GM23248 (cell line): ENCODE measurements at regions of chr5 and their contacts with region 1.

Region 1: DNA sequence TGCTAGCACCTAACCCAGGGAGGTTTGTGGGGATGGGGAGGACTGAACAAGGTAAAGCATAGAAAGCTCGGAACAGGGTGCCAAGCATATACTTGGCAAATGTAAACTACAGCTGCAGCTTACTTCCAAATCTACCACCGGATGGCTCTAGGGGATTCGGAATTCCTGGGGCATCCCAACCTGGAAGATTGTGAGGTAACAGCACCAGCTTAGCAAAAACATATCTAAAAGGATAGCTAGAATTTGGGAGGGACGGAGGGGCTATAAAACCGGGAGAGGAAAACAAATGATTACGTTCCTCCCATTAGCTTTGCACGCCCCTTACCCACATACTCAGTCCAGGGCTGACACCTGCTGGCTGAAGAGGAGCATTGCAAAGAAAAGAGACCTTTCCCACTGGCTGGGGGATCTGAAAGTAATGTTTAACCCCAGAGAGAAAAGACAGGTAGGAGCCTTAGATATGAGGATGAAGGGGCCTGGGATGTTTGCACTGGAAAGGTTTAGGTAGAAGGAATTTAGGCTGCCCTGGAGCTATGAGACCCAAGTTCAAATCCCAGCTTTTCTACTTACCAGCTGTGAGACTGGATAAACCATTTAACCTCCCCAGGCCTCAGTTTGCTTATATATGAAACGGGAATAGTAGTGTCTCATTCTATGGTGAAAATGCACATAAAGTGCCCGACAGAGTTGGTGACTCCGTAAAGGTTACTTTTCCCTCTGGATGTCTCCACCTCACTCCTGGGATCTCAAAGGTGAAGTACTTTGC is 73.6 kb downstream of the FAM114A2 start:
- DNase-seq: peak; percentile 69
- H3K4me3 ChIP-seq: peak overlapping the region; percentile 70
- H3K27ac ChIP-seq: no peak overlapping the region
- H3K4me1 ChIP-seq: peaks cover 12% of the 10 kb centered on the region
- H3K27me3 ChIP-seq: no peaks in the 10 kb centered on the region

Region 2: GRCh38 chr5:153159611-153160010 is 805.5 kb before region 1 on chr5:
- in situ Hi-C with region 1: loop called (anchors 25 kb)
- DNase-seq: peak; percentile 78
- H3K4me3 ChIP-seq: no peak overlapping the region
- H3K27ac ChIP-seq: peak overlapping the region; percentile 27; the same call in 1 of the 2 replicates
- H3K4me1 ChIP-seq: peaks cover 25% of the 10 kb centered on the region; the same call in 1 of the 2 replicates
- H3K27me3 ChIP-seq: no peaks in the 10 kb centered on the region

Region 3: DNA sequence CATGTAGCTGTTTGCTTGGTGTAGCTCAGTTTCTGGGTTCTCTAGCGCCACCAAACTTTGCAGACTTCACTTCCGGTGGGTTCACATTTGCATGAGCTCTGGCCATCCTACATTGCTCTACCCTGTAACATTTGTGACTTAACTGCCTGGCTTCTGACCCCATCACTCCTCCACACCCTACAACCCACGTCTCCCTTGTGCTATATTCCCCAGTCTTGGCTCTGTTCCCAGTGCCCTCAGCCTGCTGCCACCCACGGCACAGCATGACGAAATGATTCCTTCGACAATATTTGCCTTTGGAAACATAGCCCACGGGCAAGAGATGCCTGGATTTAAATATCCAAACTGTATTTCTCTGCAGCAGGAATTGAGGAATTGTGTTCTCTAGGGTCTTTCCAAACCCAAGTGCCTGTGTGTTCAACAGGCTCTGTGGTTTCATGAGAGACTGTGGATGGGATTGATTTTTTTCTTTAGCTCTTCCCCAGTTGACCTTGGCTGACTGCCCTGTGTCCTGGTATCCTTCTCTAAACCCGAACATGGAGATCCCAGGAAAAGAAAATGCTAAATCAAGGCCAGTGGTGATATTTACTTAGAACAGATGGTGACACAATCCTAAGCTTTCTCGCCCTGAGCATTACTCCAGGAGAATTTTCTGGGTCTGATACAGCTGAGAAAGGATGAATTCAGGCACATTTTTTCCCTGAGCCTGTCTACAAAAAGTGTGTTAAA is 519.0 kb before region 1 on chr5:
- in situ Hi-C with region 1: no loop called
- DNase-seq: peak; percentile 10
- H3K4me3 ChIP-seq: no peak overlapping the region
- H3K27ac ChIP-seq: no peak overlapping the region
- H3K4me1 ChIP-seq: no peaks in the 10 kb centered on the region
- H3K27me3 ChIP-seq: no peaks in the 10 kb centered on the region